CD8-positive, alpha-beta memory T cell (primary cell): ENCODE measurements at regions of chr20 and their contacts with region 1.

Region 1: DNA sequence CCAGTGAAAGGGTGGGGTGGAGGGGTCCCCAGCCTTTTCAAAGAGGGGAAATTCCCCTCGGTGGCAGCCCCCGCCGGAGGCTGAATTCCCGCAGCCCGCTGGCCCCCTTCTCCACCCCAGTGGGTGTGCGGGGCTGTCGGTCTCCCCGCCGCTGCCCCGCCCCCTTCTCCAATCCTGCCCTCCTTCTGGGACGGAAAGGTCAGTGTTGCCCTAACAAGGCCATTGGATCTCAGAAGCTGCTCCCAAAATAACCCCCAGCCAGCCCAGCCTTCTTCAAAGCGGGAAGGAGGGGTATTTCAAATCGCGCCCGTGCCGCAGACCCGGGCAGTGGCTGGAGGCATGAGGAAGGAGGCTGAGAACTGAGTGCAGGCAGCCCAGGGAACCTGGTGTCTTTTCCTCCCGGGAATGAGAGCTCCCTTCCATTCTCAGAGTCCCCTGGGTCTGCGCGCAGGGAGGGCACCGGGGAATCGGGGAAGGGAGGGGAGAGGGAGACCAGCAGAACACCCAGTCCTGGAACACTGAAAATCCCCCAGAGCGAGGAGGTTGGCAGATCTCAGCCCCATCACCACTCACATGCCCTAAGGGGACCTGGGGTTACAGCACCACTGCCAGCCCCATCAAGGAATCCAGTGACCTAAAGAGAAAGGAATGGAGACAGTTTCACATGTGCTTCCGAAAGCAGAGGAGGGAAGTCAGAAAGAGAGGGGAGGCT is at the start of gene JPH2:
- DNase-seq: no peak
- H3K4me3 ChIP-seq: no peak within 1 kb of the TSS
- H3K4me3 Mint-ChIP-seq: peak within 1 kb of the TSS in 3 of 7 donors; percentile 32 to 68 (median 33)
- H3K27ac ChIP-seq: no peak within 1 kb of the TSS
- H3K27ac Mint-ChIP-seq: no peak within 1 kb of the TSS
- H3K4me1 ChIP-seq: peaks cover 5% of the 10 kb centered on the region
- H3K4me1 Mint-ChIP-seq: peaks cover 0 to 10% (median 4%) of the 10 kb centered on the region in 3 donors
- H3K27me3 ChIP-seq: peaks cover 31% of the 10 kb centered on the region
- H3K27me3 Mint-ChIP-seq: peaks cover 38 to 69% of the 10 kb centered on the region in 2 donors
- total RNA-seq, gene JPH2: not detected

Region 2: GRCh38 chr20:44115762-44116644 is 71.2 kb before region 1 on chr20:
- CTCF ChIA-PET with region 1: interaction called, 14 read pairs
- POLR2A ChIA-PET with region 1: no interaction called
- DNase-seq: no peak
- H3K4me3 ChIP-seq: no peak overlapping the region
- H3K4me3 Mint-ChIP-seq: no peak overlapping the region
- H3K27ac ChIP-seq: no peak overlapping the region
- H3K27ac Mint-ChIP-seq: no peak overlapping the region
- H3K4me1 ChIP-seq: no peaks in the 10 kb centered on the region
- H3K4me1 Mint-ChIP-seq: peaks cover 0 to 1% (median 0%) of the 10 kb centered on the region in 3 donors
- H3K27me3 ChIP-seq: peaks cover 8% of the 10 kb centered on the region
- H3K27me3 Mint-ChIP-seq: peaks cover 36 to 56% of the 10 kb centered on the region in 2 donors

Region 3: GRCh38 chr20:44137210-44137801 is 49.9 kb before region 1 on chr20:
- CTCF ChIA-PET with region 1: no interaction called
- POLR2A ChIA-PET with region 1: no interaction called
- DNase-seq: no peak
- H3K4me3 ChIP-seq: no peak overlapping the region
- H3K4me3 Mint-ChIP-seq: no peak overlapping the region
- H3K27ac ChIP-seq: no peak overlapping the region
- H3K27ac Mint-ChIP-seq: no peak overlapping the region
- H3K4me1 ChIP-seq: no peaks in the 10 kb centered on the region
- H3K4me1 Mint-ChIP-seq: no peaks in the 10 kb centered on the region
- H3K27me3 ChIP-seq: no peaks in the 10 kb centered on the region
- H3K27me3 Mint-ChIP-seq: peaks cover 16 to 20% of the 10 kb centered on the region in 2 donors

Region 4: GRCh38 chr20:44210422-44211176 is 23.4 kb after region 1 on chr20 and contains the start of gene OSER1:
- CTCF ChIA-PET with region 1: interaction called, 13 read pairs
- POLR2A ChIA-PET with region 1: no interaction called
- DNase-seq: peak; percentile 97 to 99 (median 98)
- H3K4me3 ChIP-seq: peak within 1 kb of the TSS; percentile 96
- H3K4me3 Mint-ChIP-seq: peak within 1 kb of the TSS; percentile 87 to 99 (median 93)
- H3K27ac ChIP-seq: peak within 1 kb of the TSS; percentile 96
- H3K27ac Mint-ChIP-seq: peak within 1 kb of the TSS; percentile 91 to 100 (median 98)
- H3K4me1 ChIP-seq: peaks cover 52% of the 10 kb centered on the region
- H3K4me1 Mint-ChIP-seq: peaks cover 55 to 72% (median 68%) of the 10 kb centered on the region in 3 donors
- H3K27me3 ChIP-seq: no peaks in the 10 kb centered on the region
- H3K27me3 Mint-ChIP-seq: no peaks in the 10 kb centered on the region
- total RNA-seq, gene OSER1: 24.8 to 25.7 TPM

Region 5: DNA sequence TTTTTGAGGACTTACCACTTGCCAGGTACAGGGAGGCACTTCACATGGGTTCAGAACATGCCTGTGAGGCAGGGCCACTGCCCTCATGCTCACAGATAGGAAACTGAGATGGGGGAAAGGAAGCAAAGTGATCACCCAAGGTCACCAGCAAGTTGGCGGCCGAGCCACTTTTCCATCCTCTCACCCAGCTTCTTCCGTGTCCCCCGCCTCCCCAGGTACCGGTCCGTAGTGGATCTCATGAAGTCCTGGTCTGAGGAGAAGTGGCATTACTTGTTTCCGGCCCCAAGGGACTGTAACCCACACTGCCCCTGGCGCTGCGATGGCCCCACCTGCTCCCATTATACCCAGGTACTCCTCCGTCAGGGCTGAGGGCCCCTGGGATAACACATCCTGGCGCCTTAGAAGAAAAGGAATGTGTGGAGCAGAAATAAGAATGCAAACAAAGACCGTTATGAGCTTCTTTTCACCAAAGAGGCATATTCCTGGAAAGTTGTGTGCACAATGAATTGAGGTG is 156.0 kb after region 1 on chr20:
- CTCF ChIA-PET with region 1: no interaction called
- POLR2A ChIA-PET with region 1: no interaction called
- DNase-seq: no peak
- H3K4me3 ChIP-seq: no peak overlapping the region
- H3K4me3 Mint-ChIP-seq: no peak overlapping the region
- H3K27ac ChIP-seq: no peak overlapping the region
- H3K27ac Mint-ChIP-seq: no peak overlapping the region
- H3K4me1 ChIP-seq: no peaks in the 10 kb centered on the region
- H3K4me1 Mint-ChIP-seq: no peaks in the 10 kb centered on the region
- H3K27me3 ChIP-seq: no peaks in the 10 kb centered on the region
- H3K27me3 Mint-ChIP-seq: peaks cover 2 to 4% of the 10 kb centered on the region in 2 donors